Endothelial cell of umbilical vein (primary cell): ENCODE measurements at regions of chr2 and their contacts with region 1.

Region 1: GRCh38 chr2:20635675-20636584 is 15.0 kb downstream of the HS1BP3 start:
- DNase-seq: peak; percentile 84
- H3K4me3 ChIP-seq: no peak overlapping the region
- H3K27ac ChIP-seq: peak overlapping the region; percentile 72
- H3K4me1 ChIP-seq: peaks cover 20% of the 10 kb centered on the region
- H3K27me3 ChIP-seq: no peaks in the 10 kb centered on the region
- CTCF ChIP-seq: peak; percentile 96 to 99
- POLR2A ChIP-seq: no peak

Region 2: DNA sequence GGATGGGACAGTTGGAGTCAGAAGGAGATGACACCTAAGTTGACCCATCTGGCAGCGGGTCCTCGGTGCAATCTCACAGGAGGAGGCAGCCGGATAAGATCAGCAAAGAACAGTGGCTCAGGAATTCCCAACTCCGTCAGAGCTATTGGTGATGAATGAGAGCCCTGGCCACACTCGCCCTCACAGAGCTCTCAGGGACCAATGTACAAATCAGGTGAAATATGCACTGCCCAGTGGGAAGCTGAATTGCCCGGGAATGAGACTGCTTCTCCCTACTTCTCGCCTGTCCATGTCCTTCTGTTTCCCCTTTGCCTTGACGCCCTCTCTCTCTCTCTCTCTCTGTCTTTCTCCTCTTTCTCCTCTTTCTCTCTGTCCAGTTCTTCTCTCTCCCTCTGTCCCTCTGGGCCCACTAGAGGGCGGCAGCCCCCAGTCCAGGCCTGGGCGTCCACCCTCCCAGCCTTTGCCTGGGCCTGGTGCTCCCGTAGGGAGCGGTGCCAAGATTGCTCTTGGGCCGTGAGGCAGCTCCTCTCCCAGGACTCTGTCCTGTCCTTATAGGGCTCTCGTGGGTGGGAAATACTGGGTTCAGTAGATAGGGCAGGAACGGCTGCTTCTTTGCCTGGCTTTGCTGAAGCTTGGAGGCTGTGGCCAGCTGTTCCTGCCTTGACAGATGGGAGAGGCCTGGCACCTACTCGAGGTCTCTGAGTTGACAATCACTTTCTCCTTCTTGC is 257.0 kb before region 1 on chr2:
- CTCF ChIA-PET with region 1: interaction called, 66 read pairs
- POLR2A ChIA-PET with region 1: no interaction called
- dilution Hi-C with region 1: no loop called
- intact Hi-C with region 1: loop called (anchors 1 kb)
- DNase-seq: peak; percentile 78
- H3K4me3 ChIP-seq: no peak overlapping the region
- H3K27ac ChIP-seq: no peak overlapping the region
- H3K4me1 ChIP-seq: no peaks in the 10 kb centered on the region
- H3K27me3 ChIP-seq: peaks cover 6 to 9% of the 10 kb centered on the region in 2 experiments
- CTCF ChIP-seq: peak; percentile 87 to 89
- POLR2A ChIP-seq: no peak

Region 3: DNA sequence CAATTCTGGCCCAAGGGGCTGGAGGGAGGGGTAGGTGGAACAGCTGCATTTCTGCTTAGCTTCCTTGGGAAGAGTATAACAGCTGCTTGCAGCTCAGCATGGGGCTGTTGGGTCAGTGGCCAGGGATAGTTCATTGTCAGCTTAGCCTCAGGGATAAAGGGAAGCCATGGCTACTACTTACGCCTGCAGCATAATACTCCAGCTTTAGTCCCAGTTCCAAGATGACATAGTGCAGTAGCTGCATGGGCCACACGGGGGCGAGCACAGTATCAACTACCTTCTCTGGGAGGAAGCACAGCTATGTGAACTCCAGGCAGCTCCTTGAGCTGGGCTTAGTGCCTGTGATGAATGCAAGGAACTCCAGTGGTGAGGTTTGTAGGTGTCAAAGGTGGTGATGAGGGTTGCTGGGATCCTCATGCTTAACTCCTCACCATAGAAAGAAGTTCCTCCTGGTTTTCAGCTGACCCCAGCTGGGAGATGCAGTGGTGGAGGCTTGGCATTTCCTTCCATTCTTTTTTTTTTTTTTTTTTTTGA is 224.5 kb before region 1 on chr2:
- CTCF ChIA-PET with region 1: interaction called, 225 read pairs
- POLR2A ChIA-PET with region 1: interaction called, 5 read pairs
- dilution Hi-C with region 1: no loop called
- intact Hi-C with region 1: loop called (anchors 1 kb)
- DNase-seq: peak; percentile 83
- H3K4me3 ChIP-seq: no peak overlapping the region
- H3K27ac ChIP-seq: no peak overlapping the region
- H3K4me1 ChIP-seq: no peaks in the 10 kb centered on the region
- H3K27me3 ChIP-seq: peaks cover 9 to 12% of the 10 kb centered on the region in 2 experiments
- CTCF ChIP-seq: peak; percentile 88 to 90
- POLR2A ChIP-seq: no peak

Region 4: DNA sequence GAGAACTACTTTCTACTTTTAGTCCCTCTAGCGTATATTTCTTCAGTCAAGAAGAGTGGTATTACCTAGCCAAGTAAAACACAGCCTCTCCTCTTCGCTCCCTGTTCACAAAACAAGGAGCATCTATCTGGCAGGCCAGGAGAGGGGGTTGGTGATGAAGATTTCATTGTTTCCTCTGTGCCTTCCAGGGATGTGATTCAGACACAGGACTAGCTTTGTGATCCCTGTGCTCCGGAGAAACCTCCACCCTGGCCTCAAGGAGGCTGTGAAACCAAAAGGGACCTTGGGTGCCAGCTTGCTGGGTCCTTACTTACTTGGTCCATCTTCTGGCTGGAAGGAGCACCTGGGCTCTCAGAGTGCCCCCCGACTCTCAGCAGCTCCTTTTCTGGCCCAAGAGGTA is 183.4 kb before region 1 on chr2:
- CTCF ChIA-PET with region 1: interaction called, 86 read pairs
- POLR2A ChIA-PET with region 1: interaction called, 50 read pairs
- dilution Hi-C with region 1: loop called (anchors 10 kb)
- intact Hi-C with region 1: loop called (anchors 1 kb)
- DNase-seq: no peak
- H3K4me3 ChIP-seq: no peak overlapping the region
- H3K27ac ChIP-seq: peak overlapping the region; percentile 76
- H3K4me1 ChIP-seq: no peaks in the 10 kb centered on the region
- H3K27me3 ChIP-seq: no peaks in the 10 kb centered on the region
- CTCF ChIP-seq: peak; percentile 29 to 36
- POLR2A ChIP-seq: no peak

Region 5: DNA sequence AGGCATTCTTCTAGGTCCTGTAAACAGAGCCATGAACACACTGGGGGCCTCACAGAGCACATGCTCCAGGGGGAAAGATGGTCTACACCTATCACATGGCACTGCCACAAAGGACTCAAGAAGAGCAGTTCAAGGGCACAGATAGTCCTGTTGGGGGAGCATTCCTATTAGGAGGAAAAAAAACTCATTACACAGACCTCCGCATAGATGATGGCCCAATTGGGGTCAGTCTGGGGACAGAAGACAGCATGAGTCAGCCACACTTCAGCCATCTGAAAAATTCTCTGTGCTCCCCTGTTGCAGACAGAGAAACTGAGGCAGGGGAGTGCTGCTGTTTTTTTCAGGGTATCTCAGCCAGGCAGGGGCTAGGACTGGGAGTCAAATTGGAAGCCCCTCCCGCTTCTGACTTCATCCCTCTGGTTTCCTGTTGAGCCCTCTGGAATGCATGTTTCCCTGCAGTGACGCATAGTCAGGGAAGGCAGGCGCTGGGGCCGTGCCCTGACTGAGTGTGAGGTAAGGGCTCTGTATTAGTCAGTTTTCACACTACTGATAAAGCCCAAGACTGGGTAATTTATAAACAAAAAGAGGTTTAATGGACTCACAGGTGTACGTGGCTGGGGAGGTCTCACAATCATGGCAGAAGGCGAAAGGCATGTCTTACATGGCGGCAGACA is 121.2 kb before region 1 on chr2:
- CTCF ChIA-PET with region 1: interaction called, 6 read pairs
- POLR2A ChIA-PET with region 1: no interaction called
- dilution Hi-C with region 1: no loop called
- intact Hi-C with region 1: loop called (anchors 1 kb)
- DNase-seq: peak; percentile 99
- H3K4me3 ChIP-seq: peak overlapping the region in 1 of 3 experiments; percentile 15
- H3K27ac ChIP-seq: peak overlapping the region; percentile 100
- H3K4me1 ChIP-seq: peaks cover 21% of the 10 kb centered on the region
- H3K27me3 ChIP-seq: no peaks in the 10 kb centered on the region
- CTCF ChIP-seq: no peak
- POLR2A ChIP-seq: no peak

Region 6: GRCh38 chr2:20573620-20574422 is 62.1 kb before region 1 on chr2:
- CTCF ChIA-PET with region 1: interaction called, 14 read pairs
- POLR2A ChIA-PET with region 1: interaction called, 4 read pairs
- dilution Hi-C with region 1: no loop called
- intact Hi-C with region 1: loop called (anchors 1 kb)
- DNase-seq: peak; percentile 98
- H3K4me3 ChIP-seq: no peak overlapping the region
- H3K27ac ChIP-seq: peak overlapping the region; percentile 100
- H3K4me1 ChIP-seq: peaks cover 98% of the 10 kb centered on the region
- H3K27me3 ChIP-seq: no peaks in the 10 kb centered on the region
- CTCF ChIP-seq: no peak
- POLR2A ChIP-seq: no peak

Region 7: DNA sequence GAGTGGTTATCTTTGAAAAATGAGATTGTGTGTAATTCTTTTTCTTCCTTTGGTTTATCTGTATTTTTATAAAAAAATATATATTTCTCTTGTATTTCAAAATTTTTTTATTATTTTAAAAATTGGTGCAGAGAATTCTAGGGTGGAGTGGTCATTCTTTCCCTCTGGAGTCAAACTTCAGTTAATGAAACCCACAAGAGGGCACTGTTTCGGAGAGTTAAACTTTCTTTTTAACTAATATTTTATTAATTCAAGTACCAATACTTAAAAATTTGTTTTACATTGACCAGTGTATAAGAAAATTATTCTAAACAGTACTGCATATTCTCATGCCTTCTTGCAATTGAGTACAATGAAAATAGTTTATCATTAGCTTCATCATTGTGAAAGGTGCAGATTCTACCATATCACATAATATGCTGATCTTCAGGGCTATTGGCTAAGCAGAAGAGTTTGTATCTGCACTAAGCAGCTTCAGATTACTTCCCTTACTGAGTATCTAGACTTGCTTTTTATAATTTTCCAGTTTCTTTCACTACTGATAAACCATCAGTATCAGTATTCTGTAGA is 35.1 kb before region 1 on chr2:
- CTCF ChIA-PET with region 1: interaction called, 11 read pairs
- POLR2A ChIA-PET with region 1: no interaction called
- dilution Hi-C with region 1: no loop called
- intact Hi-C with region 1: loop called (anchors 1 kb)
- DNase-seq: peak; percentile 71
- H3K4me3 ChIP-seq: no peak overlapping the region
- H3K27ac ChIP-seq: peak overlapping the region; percentile 35
- H3K4me1 ChIP-seq: peaks cover 44% of the 10 kb centered on the region
- H3K27me3 ChIP-seq: no peaks in the 10 kb centered on the region
- CTCF ChIP-seq: peak in 1 of 2 donors; percentile 16
- POLR2A ChIP-seq: no peak

Region 8: GRCh38 chr2:21194858-21195271 is 558.9 kb after region 1 on chr2:
- CTCF ChIA-PET with region 1: no interaction called
- POLR2A ChIA-PET with region 1: no interaction called
- dilution Hi-C with region 1: no loop called
- intact Hi-C with region 1: no loop called
- DNase-seq: no peak
- H3K4me3 ChIP-seq: no peak overlapping the region
- H3K27ac ChIP-seq: no peak overlapping the region
- H3K4me1 ChIP-seq: no peaks in the 10 kb centered on the region
- H3K27me3 ChIP-seq: no peaks in the 10 kb centered on the region
- CTCF ChIP-seq: no peak
- POLR2A ChIP-seq: no peak

Region 9: GRCh38 chr2:21890041-21890440 is 1254.1 kb after region 1 on chr2:
- CTCF ChIA-PET with region 1: no interaction called
- POLR2A ChIA-PET with region 1: no interaction called
- dilution Hi-C with region 1: no loop called
- intact Hi-C with region 1: no loop called
- DNase-seq: no peak
- H3K4me3 ChIP-seq: no peak overlapping the region
- H3K27ac ChIP-seq: no peak overlapping the region
- H3K4me1 ChIP-seq: no peaks in the 10 kb centered on the region
- H3K27me3 ChIP-seq: no peaks in the 10 kb centered on the region
- CTCF ChIP-seq: no peak
- POLR2A ChIP-seq: no peak